ENCODE measurements at regions of chr3 and their contacts with region 1.

Region 1: GRCh38 chr3:190120269-190121060 is at the start of gene P3H2:
- DNase-seq: peak; percentile 93
- H3K4me3 ChIP-seq: peak within 1 kb of the TSS; percentile 60 to 83 (median 62)
- H3K27ac ChIP-seq: peak within 1 kb of the TSS; percentile 51
- H3K4me1 ChIP-seq: peaks cover 9% of the 10 kb centered on the region
- H3K27me3 ChIP-seq: peaks cover 0 to 2% of the 10 kb centered on the region in 2 experiments
- CTCF ChIP-seq: peak; percentile 54 to 70
- POLR2A ChIP-seq: no peak
- total RNA-seq, gene P3H2: 4.8 and 6.6 TPM in 2 replicates

Region 2: GRCh38 chr3:189961525-189962161 is 158.8 kb before region 1 on chr3:
- CTCF ChIA-PET with region 1: interaction called, 37 read pairs
- POLR2A ChIA-PET with region 1: no interaction called
- dilution Hi-C with region 1: no loop called
- intact Hi-C with region 1: no loop called
- DNase-seq: peak; percentile 89
- H3K4me3 ChIP-seq: no peak overlapping the region
- H3K27ac ChIP-seq: no peak overlapping the region
- H3K4me1 ChIP-seq: no peaks in the 10 kb centered on the region
- H3K27me3 ChIP-seq: no peaks in the 10 kb centered on the region
- CTCF ChIP-seq: peak; percentile 77 to 90
- POLR2A ChIP-seq: no peak

Region 3: GRCh38 chr3:190017521-190018288 is 102.8 kb before region 1 on chr3:
- CTCF ChIA-PET with region 1: interaction called, 19 read pairs
- POLR2A ChIA-PET with region 1: no interaction called
- dilution Hi-C with region 1: no loop called
- intact Hi-C with region 1: loop called (anchors 1 kb)
- DNase-seq: peak; percentile 84
- H3K4me3 ChIP-seq: no peak overlapping the region
- H3K27ac ChIP-seq: no peak overlapping the region
- H3K4me1 ChIP-seq: peaks cover 3% of the 10 kb centered on the region
- H3K27me3 ChIP-seq: no peaks in the 10 kb centered on the region
- CTCF ChIP-seq: peak; percentile 28 to 47
- POLR2A ChIP-seq: no peak

Region 4: DNA sequence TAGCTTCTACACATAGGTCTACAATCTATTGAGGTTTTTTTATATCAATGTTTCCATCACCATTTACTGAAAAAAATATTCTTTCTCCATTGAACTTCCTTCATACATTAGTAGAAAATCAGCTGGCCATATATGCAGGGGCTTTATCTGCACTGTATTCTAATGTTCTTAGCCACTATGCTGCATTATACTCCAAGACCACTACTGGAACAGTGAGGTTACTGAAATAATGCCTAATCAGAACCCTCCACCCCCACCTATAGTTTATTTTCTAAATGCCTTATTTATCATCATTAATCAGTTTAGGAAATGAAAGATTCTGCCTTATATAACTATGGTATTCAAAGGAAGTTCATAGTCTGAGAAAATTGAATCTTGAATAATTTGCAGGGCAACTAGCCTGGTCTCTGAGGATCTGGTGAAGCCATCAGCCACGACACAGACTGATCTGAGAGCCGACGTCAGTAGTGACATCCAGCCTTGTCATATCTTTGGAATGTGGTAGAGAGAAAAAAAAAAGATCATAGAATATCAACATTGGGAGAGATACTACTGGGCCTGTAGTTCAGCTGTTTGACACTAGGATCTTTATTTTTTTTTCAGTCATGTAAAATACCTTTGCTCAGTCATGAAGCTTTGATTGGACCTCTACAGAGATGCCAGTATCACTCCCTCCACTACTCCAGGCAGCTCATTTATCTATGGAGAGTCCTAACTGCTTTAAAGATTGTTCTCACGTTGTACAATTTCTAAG is 66.4 kb before region 1 on chr3:
- CTCF ChIA-PET with region 1: interaction called, 13 read pairs
- POLR2A ChIA-PET with region 1: no interaction called
- dilution Hi-C with region 1: no loop called
- intact Hi-C with region 1: loop called (anchors 2 kb)
- DNase-seq: peak; percentile 34
- H3K4me3 ChIP-seq: no peak overlapping the region
- H3K27ac ChIP-seq: peak overlapping the region; percentile 4
- H3K4me1 ChIP-seq: peaks cover 13% of the 10 kb centered on the region
- H3K27me3 ChIP-seq: no peaks in the 10 kb centered on the region
- CTCF ChIP-seq: no peak
- POLR2A ChIP-seq: no peak

Region 5: DNA sequence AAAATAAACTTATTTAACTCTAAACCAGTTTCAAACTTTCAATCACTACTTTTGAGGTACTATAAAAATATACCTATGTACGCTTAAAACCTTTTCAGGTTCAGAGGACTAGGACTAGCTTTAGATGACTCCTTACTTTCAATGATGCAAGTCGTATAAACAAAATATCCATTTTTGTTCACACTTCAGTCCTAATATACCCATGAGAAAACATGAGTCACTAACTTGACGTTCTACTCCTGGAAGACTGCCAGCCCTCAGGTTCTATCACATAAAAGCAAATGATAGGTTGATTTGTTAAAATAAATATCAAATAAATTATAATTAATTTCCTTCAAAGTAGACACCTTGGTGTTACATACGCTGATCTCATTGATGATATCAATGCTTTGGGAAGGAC is 10.9 kb after region 1 on chr3:
- CTCF ChIA-PET with region 1: interaction called, 17 read pairs
- POLR2A ChIA-PET with region 1: no interaction called
- dilution Hi-C with region 1: no loop called
- intact Hi-C with region 1: no loop called
- DNase-seq: peak; percentile 50
- H3K4me3 ChIP-seq: no peak overlapping the region
- H3K27ac ChIP-seq: no peak overlapping the region
- H3K4me1 ChIP-seq: no peaks in the 10 kb centered on the region
- H3K27me3 ChIP-seq: peaks cover 3 to 4% of the 10 kb centered on the region in 2 experiments
- CTCF ChIP-seq: no peak
- POLR2A ChIP-seq: no peak

Region 6: DNA sequence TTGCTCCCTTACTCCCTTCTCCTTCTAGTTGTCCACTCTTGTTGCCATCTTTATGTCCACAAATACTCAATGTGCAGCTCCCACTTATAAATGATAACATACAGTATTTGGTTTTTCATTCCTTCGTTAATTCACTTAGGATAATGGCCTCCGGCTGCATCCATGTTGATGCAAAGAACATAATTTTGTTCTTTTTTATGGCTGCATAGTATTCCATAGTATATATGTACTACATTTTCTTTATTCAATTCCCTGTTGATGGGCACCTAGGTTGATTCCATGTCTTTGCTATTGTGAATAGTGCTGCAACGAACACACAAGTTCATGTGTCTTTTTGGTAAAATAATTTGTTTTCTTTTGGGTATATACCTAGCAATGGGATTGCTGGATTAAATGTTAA is 21.6 kb after region 1 on chr3:
- CTCF ChIA-PET with region 1: no interaction called
- POLR2A ChIA-PET with region 1: no interaction called
- dilution Hi-C with region 1: no loop called
- intact Hi-C with region 1: no loop called
- DNase-seq: no peak
- H3K4me3 ChIP-seq: no peak overlapping the region
- H3K27ac ChIP-seq: no peak overlapping the region
- H3K4me1 ChIP-seq: no peaks in the 10 kb centered on the region
- H3K27me3 ChIP-seq: peaks cover 0 to 6% of the 10 kb centered on the region in 2 experiments
- CTCF ChIP-seq: no peak
- POLR2A ChIP-seq: no peak

Region 7: DNA sequence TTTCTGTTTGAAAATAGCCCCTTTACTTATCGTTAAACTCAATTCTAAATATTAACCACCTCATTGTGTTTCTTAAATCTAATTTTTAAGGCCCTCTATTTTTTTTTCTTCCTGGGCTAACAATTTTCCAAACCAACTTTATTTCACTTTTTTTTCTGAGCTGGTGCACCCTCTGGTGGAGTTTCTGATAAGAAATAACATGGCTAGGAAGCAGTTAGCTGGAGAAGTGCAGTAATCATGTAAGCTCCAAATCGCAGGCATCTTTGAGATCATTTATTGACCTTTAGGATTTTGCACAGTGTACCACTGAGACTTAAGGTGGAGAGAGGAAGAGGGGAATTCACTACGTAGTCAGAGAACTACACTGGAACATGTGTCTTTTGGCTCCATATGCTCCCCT is 322.8 kb after region 1 on chr3:
- CTCF ChIA-PET with region 1: interaction called, 10 read pairs
- POLR2A ChIA-PET with region 1: no interaction called
- dilution Hi-C with region 1: no loop called
- intact Hi-C with region 1: no loop called
- DNase-seq: peak; percentile 29
- H3K4me3 ChIP-seq: no peak overlapping the region
- H3K27ac ChIP-seq: no peak overlapping the region
- H3K4me1 ChIP-seq: peaks cover 4% of the 10 kb centered on the region
- H3K27me3 ChIP-seq: peaks cover 4% of the 10 kb centered on the region in 2 experiments
- CTCF ChIP-seq: peak in 1 of 2 donors; percentile 10
- POLR2A ChIP-seq: no peak